Posterior vena cava (tissue), 2 donors: ENCODE measurements at regions of chr12 and their contacts with region 1.

Region 1: GRCh38 chr12:69679119-69679518 is 20.0 kb downstream of the BEST3 start:
- DNase-seq: no peak

Region 2: GRCh38 chr12:69648481-69648880 is 30.6 kb before region 1 on chr12:
- intact Hi-C with region 1: loop called in 1 of 2 experiments (anchors 2 kb)
- DNase-seq: no peak